ENCODE measurements at regions of chr2 and their contacts with region 1.

Region 1: DNA sequence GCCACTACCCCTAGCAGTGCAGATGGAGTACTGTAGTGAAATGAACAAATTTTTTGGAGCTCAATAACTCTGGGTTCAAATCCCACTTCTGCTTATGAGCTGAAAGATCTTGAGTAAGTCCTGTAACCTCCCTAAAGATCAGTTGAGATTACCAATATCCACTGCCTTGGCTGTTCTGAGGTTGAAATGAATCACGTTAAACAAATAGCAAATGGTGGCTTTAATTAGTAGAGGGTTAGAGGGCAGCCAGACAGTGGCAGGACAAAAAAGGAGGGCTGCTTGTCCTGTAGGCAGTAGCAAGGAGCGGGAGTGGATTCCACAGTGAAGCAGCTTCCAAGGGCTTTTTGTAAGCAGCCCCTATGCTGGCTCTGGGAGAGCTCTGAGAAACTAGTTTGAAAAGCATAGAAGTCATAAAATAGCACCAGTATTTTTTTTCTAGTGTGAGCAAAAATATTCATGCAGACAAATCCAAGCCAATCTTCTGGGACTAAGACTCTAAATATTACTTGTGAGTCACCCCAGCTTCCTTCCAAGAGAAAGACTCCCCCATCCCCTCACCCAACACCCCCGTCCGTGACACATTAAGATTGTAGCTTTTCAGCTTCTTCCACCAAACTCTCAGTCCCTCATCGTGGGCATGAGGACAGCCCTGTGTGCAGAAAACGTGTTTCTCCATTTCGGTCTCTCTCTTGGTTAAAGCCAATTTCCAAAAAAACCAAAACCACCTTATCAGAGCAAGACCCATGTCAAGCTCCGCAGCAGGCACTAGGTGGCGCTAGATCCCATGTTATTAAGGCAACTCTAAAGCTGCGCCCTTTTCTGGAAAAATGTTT is 123.5 kb upstream of the LGALSL start:
- DNase-seq: peak; percentile 84
- ATAC-seq: peak; percentile 20
- H3K4me3 Mint-ChIP-seq: peak overlapping the region; percentile 25
- H3K27ac Mint-ChIP-seq: peak overlapping the region; percentile 37
- H3K4me1 Mint-ChIP-seq: peaks cover 47% of the 10 kb centered on the region
- H3K27me3 Mint-ChIP-seq: peaks cover 9% of the 10 kb centered on the region

Region 2: DNA sequence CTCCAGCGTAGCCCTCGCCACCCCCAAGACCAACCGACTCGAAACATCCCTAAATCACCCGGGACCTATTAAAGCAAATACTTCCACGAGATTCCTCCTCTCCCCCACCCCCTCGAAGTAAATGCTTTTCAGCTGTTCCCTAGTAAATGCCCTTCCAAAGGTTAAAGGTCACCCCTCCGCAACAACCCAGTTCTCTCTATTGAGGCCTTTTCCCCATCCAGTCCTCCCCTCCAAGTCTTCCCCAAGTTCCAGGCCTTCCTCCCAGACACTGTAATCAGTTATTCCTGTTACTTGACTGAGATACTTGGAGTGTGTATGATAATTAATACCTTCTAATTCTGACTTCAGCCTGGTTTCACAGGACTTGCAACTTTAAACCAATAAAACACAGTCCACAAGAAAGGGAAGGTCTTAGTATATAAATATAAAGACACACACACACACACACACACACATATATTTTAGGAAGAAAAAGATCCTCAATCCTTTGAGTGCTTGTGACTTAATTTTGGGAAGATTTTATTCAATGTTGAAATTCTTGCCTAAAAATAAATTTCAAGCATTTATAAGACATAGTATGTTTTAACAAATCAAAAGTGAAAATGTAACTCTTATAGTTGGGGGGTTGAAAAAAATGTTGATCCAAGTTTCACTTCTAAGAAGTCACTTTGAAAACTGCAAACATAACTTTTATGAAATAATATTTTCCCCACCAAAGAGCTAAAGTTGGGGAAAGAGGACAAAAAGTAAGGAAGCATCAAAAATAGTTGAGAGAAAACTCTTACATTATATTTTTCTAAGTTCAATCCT is 310.6 kb before region 1 on chr2:
- CTCF ChIA-PET with region 1: interaction called, 10 read pairs
- DNase-seq: peak; percentile 46
- ATAC-seq: peak; percentile 1
- H3K4me3 Mint-ChIP-seq: peak overlapping the region; percentile 96
- H3K27ac Mint-ChIP-seq: peak overlapping the region; percentile 96
- H3K4me1 Mint-ChIP-seq: peaks cover 35% of the 10 kb centered on the region
- H3K27me3 Mint-ChIP-seq: no peaks in the 10 kb centered on the region

Region 3: GRCh38 chr2:64214281-64215115 is 116.0 kb before region 1 on chr2:
- CTCF ChIA-PET with region 1: interaction called, 10 read pairs
- DNase-seq: peak; percentile 64
- ATAC-seq: peak; percentile 48
- H3K4me3 Mint-ChIP-seq: peak overlapping the region; percentile 67
- H3K27ac Mint-ChIP-seq: peak overlapping the region; percentile 99
- H3K4me1 Mint-ChIP-seq: peaks cover 50% of the 10 kb centered on the region
- H3K27me3 Mint-ChIP-seq: no peaks in the 10 kb centered on the region

Region 4: GRCh38 chr2:64454386-64455332 is 124.2 kb after region 1 on chr2:
- CTCF ChIA-PET with region 1: interaction called, 12 read pairs
- DNase-seq: peak; percentile 46
- ATAC-seq: peak; percentile 74
- H3K4me3 Mint-ChIP-seq: peak overlapping the region; percentile 74
- H3K27ac Mint-ChIP-seq: no peak overlapping the region
- H3K4me1 Mint-ChIP-seq: peaks cover 11% of the 10 kb centered on the region
- H3K27me3 Mint-ChIP-seq: peaks cover 47% of the 10 kb centered on the region

Region 5: DNA sequence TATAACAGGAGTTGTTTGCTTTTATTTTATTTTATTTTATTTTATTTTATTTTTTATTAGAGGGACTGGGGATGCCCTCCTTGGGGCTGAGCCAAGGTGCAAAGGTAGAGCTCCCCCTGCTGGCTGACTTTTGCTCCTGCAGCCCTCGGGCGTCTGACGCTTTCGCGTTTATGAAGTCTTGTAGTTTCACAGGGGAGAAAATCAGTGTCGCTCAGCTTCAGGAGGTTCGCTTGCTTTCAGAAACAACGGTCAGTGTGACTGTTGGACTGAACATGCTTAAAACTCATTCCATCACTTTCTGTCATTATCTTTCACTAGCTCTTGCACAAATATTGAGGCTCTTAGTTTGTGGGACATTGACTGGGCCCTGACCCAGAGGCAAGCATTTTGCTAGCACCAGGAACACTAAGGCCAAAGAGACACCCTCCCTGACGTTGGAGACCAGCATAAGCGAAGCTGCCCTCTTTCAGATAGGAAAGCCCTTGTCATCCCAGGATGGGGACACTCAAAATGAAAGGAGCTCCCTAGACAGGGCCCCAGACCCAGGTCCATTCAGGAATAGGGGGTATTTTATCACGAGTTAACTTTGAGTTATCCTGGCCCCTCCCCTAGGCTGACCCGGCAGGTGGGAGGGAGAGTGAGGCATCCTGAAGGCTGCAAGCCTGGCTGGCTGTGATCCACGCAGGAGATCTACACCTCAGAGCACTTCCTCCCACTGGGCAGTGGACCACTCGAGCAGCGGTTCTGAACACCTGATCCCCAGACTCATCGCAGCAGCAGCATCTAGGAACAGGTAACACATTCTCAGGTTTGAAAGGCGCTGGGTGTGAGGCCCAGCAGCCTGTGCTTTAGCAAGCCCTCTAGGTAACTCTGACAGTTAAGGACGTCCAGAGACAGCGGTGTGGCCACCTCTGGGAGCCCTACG is 157.8 kb after region 1 on chr2:
- CTCF ChIA-PET with region 1: interaction called, 245 read pairs
- DNase-seq: peak; percentile 84
- ATAC-seq: peak; percentile 87
- H3K4me3 Mint-ChIP-seq: no peak overlapping the region
- H3K27ac Mint-ChIP-seq: no peak overlapping the region
- H3K4me1 Mint-ChIP-seq: peaks cover 21% of the 10 kb centered on the region
- H3K27me3 Mint-ChIP-seq: peaks cover 30% of the 10 kb centered on the region

Region 6: GRCh38 chr2:64609227-64609941 is 278.9 kb after region 1 on chr2:
- CTCF ChIA-PET with region 1: interaction called, 11 read pairs
- DNase-seq: peak; percentile 75
- ATAC-seq: peak; percentile 75
- H3K4me3 Mint-ChIP-seq: peak overlapping the region; percentile 64
- H3K27ac Mint-ChIP-seq: no peak overlapping the region
- H3K4me1 Mint-ChIP-seq: peaks cover 26% of the 10 kb centered on the region
- H3K27me3 Mint-ChIP-seq: peaks cover 14% of the 10 kb centered on the region